H1 (cell line): ENCODE measurements at regions of chr1 and their contacts with region 1.

Region 1: GRCh38 chr1:220370031-220370700 is 97.9 kb upstream of the RAB3GAP2 start:
- DNase-seq: no peak
- H3K4me3 ChIP-seq: no peak overlapping the region
- H3K27ac ChIP-seq: no peak overlapping the region
- H3K4me1 ChIP-seq: peaks cover 6 to 14% (median 11%) of the 10 kb centered on the region in 4 experiments; a peak in 6 of 7 replicates
- H3K27me3 ChIP-seq: no peaks in the 10 kb centered on the region
- CTCF ChIP-seq: no peak
- EP300 ChIP-seq: no peak
- POLR2A ChIP-seq: no peak
- RAD21 ChIP-seq: no peak

Region 2: DNA sequence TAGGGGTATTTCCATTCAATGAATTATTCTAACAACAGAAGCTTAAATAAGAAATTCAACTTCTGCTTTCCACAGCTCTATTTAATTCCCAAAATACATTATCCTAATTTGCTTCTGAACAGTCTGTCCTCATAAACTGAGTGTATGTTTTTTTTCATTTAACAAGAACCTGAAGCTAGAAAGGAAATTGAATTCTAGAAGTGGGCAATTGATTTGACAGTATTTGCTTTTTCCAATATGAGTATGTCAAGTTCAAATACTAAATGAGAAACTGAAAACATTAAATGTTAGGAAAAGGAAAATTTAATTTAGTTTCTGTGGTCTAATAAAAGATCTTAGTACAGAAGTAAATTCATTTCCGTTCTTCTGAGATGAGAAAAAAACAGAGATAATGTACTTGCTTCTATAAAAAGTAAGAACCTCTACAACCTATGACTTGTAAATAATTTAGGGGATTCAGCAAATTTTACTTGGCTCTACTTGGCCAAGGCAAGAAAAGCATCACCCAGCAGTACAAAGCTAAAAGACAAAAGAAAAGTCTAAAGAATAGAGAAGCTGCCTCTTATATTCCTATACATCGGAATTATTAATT is 129.0 kb before region 1 on chr1:
- CTCF ChIA-PET with region 1: no interaction called
- POLR2A ChIA-PET with region 1: no interaction called
- DNase-seq: no peak
- H3K4me3 ChIP-seq: no peak overlapping the region
- H3K27ac ChIP-seq: no peak overlapping the region
- H3K4me1 ChIP-seq: peaks cover 0 to 3% (median 0%) of the 10 kb centered on the region in 4 experiments; a peak in 1 of 7 replicates
- H3K27me3 ChIP-seq: no peaks in the 10 kb centered on the region
- CTCF ChIP-seq: no peak
- EP300 ChIP-seq: no peak
- POLR2A ChIP-seq: no peak
- RAD21 ChIP-seq: no peak

Region 3: DNA sequence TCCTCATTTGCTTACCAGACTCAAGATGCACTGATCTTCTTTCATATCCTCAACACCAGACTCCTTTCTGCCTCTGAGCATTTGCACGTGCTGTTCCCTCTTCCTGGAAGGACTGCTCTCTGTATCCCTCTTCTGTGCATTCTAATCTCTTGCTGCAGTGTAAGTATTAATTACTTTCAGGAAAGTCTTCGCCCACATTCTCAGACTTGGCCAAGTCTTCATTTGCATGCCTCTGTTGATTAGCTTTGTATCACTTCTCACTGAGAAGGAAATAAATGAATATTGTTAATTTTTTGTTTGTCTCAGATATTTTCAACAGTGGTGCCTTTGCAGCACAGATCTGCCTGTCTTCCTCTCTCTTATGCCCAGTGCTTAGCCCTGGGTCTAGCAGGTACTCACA is 47.6 kb before region 1 on chr1:
- CTCF ChIA-PET with region 1: no interaction called
- POLR2A ChIA-PET with region 1: no interaction called
- DNase-seq: no peak
- H3K4me3 ChIP-seq: no peak overlapping the region
- H3K27ac ChIP-seq: no peak overlapping the region
- H3K4me1 ChIP-seq: peaks cover 0 to 3% (median 1%) of the 10 kb centered on the region in 4 experiments; a peak in 2 of 7 replicates
- H3K27me3 ChIP-seq: no peaks in the 10 kb centered on the region; a peak in 1 of 7 replicates
- CTCF ChIP-seq: no peak
- EP300 ChIP-seq: no peak
- POLR2A ChIP-seq: no peak
- RAD21 ChIP-seq: no peak

Region 4: GRCh38 chr1:220353229-220354012 is 16.7 kb before region 1 on chr1:
- CTCF ChIA-PET with region 1: interaction called, 23 read pairs
- POLR2A ChIA-PET with region 1: no interaction called
- DNase-seq: no peak
- H3K4me3 ChIP-seq: no peak overlapping the region
- H3K27ac ChIP-seq: no peak overlapping the region
- H3K4me1 ChIP-seq: peaks cover 0 to 4% (median 0%) of the 10 kb centered on the region in 4 experiments; a peak in 2 of 7 replicates
- H3K27me3 ChIP-seq: no peaks in the 10 kb centered on the region
- CTCF ChIP-seq: peak; percentile 41 to 50 (median 41)
- EP300 ChIP-seq: no peak
- POLR2A ChIP-seq: no peak
- RAD21 ChIP-seq: peak; percentile 38 to 58

Region 5: GRCh38 chr1:220380885-220381284 is 10.7 kb after region 1 on chr1:
- CTCF ChIA-PET with region 1: interaction called, 49 read pairs
- POLR2A ChIA-PET with region 1: no interaction called
- DNase-seq: no peak
- H3K4me3 ChIP-seq: no peak overlapping the region
- H3K27ac ChIP-seq: no peak overlapping the region
- H3K4me1 ChIP-seq: peaks cover 0 to 5% (median under 1%) of the 10 kb centered on the region in 4 experiments; a peak in 3 of 7 replicates
- H3K27me3 ChIP-seq: no peaks in the 10 kb centered on the region
- CTCF ChIP-seq: no peak
- EP300 ChIP-seq: no peak
- POLR2A ChIP-seq: no peak
- RAD21 ChIP-seq: no peak